Endothelial cell of umbilical vein (primary cell): ENCODE measurements at regions of chr11 and their contacts with region 1.

Region 1: GRCh38 chr11:84899740-84900139 is 727.4 kb downstream of the DLG2 start:
- DNase-seq: no peak
- H3K4me3 ChIP-seq: no peak overlapping the region
- H3K27ac ChIP-seq: no peak overlapping the region
- H3K4me1 ChIP-seq: no peaks in the 10 kb centered on the region
- H3K27me3 ChIP-seq: no peaks in the 10 kb centered on the region
- CTCF ChIP-seq: no peak
- POLR2A ChIP-seq: no peak

Region 2: DNA sequence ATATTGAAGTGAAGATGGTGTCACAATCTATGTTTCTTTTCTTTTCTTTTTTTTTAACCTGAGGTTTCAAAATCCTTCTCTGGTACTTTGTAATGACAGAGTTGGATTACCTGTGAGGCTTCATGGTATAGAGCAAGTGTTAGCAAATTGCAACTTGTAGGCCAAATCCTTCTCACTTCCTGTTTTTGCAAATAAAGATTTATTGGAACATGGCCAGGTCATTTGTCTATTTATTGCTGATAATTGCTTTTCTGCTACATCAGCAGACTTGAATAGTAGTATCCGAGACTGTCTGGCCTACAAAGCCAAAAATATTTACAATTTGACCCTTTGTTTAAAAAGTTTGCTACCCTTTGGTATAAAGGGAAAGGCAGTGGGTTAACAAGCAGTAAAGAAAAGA is 554.1 kb before region 1 on chr11:
- CTCF ChIA-PET with region 1: no interaction called
- POLR2A ChIA-PET with region 1: no interaction called
- dilution Hi-C with region 1: no loop called
- intact Hi-C with region 1: loop called (anchors 5 kb)
- DNase-seq: no peak
- H3K4me3 ChIP-seq: no peak overlapping the region
- H3K27ac ChIP-seq: no peak overlapping the region
- H3K4me1 ChIP-seq: no peaks in the 10 kb centered on the region
- H3K27me3 ChIP-seq: no peaks in the 10 kb centered on the region
- CTCF ChIP-seq: no peak
- POLR2A ChIP-seq: no peak

Region 3: DNA sequence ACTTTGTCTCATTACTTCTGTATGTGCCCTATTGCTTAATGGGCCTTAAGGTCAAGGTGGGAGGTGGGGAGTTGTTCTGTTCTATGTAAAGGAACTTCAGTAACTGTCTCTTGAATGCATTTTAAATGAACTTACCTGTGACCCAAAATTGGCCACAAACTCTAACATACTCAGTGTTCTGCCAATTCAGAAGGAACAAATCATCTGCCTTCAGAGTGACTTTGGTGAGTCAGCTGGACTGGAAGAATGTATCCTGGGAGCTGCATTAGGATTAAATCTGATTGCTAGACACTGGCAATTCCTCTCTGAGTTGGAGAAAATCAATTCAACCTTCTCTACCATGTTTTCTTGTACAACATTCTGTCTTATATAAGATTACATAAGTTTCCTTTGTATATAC is 377.4 kb before region 1 on chr11:
- CTCF ChIA-PET with region 1: no interaction called
- POLR2A ChIA-PET with region 1: no interaction called
- dilution Hi-C with region 1: no loop called
- intact Hi-C with region 1: no loop called
- DNase-seq: no peak
- H3K4me3 ChIP-seq: no peak overlapping the region
- H3K27ac ChIP-seq: no peak overlapping the region
- H3K4me1 ChIP-seq: no peaks in the 10 kb centered on the region
- H3K27me3 ChIP-seq: no peaks in the 10 kb centered on the region
- CTCF ChIP-seq: no peak
- POLR2A ChIP-seq: no peak

Region 4: DNA sequence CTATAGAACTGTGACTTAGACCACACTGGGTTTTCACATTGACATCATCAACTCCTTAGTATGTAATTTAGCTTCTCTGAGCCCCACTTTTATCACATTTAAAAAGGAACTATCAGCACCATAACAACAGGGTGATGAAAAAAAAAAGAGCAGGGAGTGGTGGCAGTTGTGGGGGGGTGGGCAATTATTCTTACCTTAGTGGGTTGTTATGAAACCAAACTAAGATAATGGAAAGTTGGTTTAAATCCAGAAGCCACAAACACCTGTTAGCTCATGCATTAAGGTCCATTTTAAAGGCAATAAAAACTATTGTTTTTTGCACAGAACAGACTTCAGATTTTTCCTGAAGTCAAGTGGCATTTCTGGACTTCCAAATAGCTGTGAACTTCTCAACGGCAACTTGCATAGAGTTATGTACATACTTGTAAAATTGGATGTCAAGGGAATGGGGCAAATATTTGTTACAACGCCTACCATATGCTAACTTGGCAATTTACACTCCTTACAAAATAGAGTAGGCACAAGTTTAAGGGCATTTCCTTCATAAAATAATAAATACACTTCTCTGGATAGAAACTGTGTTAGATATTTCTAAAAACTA is 66.2 kb before region 1 on chr11:
- CTCF ChIA-PET with region 1: no interaction called
- POLR2A ChIA-PET with region 1: no interaction called
- dilution Hi-C with region 1: no loop called
- intact Hi-C with region 1: no loop called
- DNase-seq: no peak
- H3K4me3 ChIP-seq: no peak overlapping the region
- H3K27ac ChIP-seq: no peak overlapping the region
- H3K4me1 ChIP-seq: no peaks in the 10 kb centered on the region
- H3K27me3 ChIP-seq: no peaks in the 10 kb centered on the region
- CTCF ChIP-seq: no peak
- POLR2A ChIP-seq: no peak